Activated naive CD4-positive, alpha-beta T cell treated with anti-CD3 and anti-CD28 coated beads for 36 hours (primary cell): ENCODE measurements at regions of chr9 and their contacts with region 1.

Region 1: DNA sequence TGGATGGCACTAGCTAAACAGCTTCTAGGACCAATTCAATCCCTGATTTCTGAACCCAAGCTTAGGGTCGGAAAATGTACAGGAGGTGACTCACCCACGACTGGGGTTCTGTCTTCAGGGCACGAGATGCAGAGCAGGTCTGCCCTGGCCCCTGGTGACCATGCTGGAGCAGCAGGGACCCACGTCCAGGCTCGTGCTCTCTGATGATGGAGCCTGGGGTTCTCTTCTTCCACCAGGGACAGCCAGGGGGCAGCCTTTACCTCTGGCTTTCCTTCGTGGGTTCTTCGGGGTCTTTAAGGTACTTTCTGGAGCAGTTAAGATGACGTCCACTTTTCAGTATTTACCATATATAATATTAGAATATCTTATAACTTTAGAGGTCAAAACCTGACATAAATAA is 2.1 kb downstream of the CFAP77 start:
- DNase-seq: peak; percentile 47
- H3K4me3 Mint-ChIP-seq: no peak overlapping the region
- H3K27ac Mint-ChIP-seq: no peak overlapping the region
- H3K4me1 Mint-ChIP-seq: peaks cover 23% of the 10 kb centered on the region
- H3K27me3 Mint-ChIP-seq: peaks cover 45% of the 10 kb centered on the region

Region 2: GRCh38 chr9:132507746-132508469 is 95.8 kb after region 1 on chr9:
- CTCF ChIA-PET with region 1: no interaction called
- intact Hi-C with region 1: loop called (anchors 1 kb)
- DNase-seq: peak; percentile 81
- H3K4me3 Mint-ChIP-seq: no peak overlapping the region
- H3K27ac Mint-ChIP-seq: no peak overlapping the region
- H3K4me1 Mint-ChIP-seq: peaks cover 2% of the 10 kb centered on the region
- H3K27me3 Mint-ChIP-seq: peaks cover 7% of the 10 kb centered on the region

Region 3: GRCh38 chr9:132575005-132575609 is 163.0 kb after region 1 on chr9:
- CTCF ChIA-PET with region 1: interaction called, 18 read pairs
- intact Hi-C with region 1: loop called (anchors 1 kb)
- DNase-seq: peak; percentile 76
- H3K4me3 Mint-ChIP-seq: no peak overlapping the region
- H3K27ac Mint-ChIP-seq: no peak overlapping the region
- H3K4me1 Mint-ChIP-seq: no peaks in the 10 kb centered on the region
- H3K27me3 Mint-ChIP-seq: peaks cover 50% of the 10 kb centered on the region